ENCODE measurements at regions of chr1 and their contacts with region 1.

Region 1: DNA sequence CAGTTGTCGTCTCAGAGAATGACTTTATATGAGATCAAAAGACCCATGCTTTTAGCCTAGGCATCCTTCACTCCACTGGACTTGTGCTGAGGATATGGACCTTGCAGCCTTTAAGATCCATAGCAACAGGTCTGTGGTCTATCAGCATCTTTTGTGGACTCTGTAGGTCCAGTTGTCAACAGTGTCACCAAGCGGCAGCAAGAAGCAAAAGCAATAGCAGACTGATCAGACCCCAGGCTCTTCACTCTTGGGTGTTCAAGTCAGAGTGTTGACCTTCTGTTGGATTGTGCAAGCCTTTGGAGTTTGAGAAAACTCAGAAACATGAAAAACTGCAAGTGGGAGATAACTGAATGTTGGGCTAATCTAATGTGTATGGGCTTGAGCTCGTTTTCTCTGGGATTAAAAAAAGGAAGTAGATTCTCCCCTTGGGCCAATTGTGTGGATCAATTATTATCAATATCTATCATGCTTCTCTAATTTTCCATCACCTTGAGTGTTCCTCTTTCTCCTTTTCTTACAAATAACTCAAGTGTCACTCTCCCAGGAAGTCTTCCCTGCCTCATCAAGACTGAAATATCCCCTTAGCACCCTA is 144.2 kb downstream of the LYPLAL1 start:
- DNase-seq: peak; percentile 44
- H3K4me3 ChIP-seq: no peak overlapping the region
- H3K27ac ChIP-seq: no peak overlapping the region
- H3K4me1 ChIP-seq: peaks cover 7% of the 10 kb centered on the region
- H3K27me3 ChIP-seq: no peaks in the 10 kb centered on the region
- CTCF ChIP-seq: peak in 1 of 2 donors; percentile 18
- POLR2A ChIP-seq: no peak

Region 2: DNA sequence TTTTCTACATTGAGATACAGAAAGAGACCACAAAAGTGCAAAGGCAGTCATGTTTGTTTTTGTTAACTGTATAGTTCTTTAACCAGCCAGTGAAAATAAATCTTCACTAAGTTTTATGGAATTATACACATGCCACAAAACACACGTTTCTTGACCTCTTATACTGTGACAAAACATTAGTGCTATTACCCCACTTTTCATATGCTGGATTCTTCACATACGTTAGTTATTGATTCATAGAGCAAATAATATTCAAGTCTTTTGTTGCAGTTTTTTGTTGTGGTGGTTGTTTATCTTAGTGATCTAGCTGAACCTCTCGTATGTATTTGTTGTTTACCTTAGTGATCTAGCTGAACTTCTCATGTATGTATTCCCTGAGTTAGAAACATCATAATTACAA is 116.2 kb before region 1 on chr1:
- CTCF ChIA-PET with region 1: no interaction called
- POLR2A ChIA-PET with region 1: no interaction called
- dilution Hi-C with region 1: no loop called
- intact Hi-C with region 1: loop called (anchors 5 kb)
- DNase-seq: no peak
- H3K4me3 ChIP-seq: no peak overlapping the region
- H3K27ac ChIP-seq: no peak overlapping the region
- H3K4me1 ChIP-seq: no peaks in the 10 kb centered on the region
- H3K27me3 ChIP-seq: no peaks in the 10 kb centered on the region
- CTCF ChIP-seq: no peak
- POLR2A ChIP-seq: no peak

Measured in endothelial cell of umbilical vein (primary cell).